Left cardiac atrium (tissue), 4 donors: ENCODE measurements at regions of chr12 and their contacts with region 1.

Region 1: GRCh38 chr12:22083167-22083566 is 37.1 kb downstream of the CMAS start:
- DNase-seq: no peak
- ATAC-seq: peak in 1 of 2 donors; percentile 24

Region 2: DNA sequence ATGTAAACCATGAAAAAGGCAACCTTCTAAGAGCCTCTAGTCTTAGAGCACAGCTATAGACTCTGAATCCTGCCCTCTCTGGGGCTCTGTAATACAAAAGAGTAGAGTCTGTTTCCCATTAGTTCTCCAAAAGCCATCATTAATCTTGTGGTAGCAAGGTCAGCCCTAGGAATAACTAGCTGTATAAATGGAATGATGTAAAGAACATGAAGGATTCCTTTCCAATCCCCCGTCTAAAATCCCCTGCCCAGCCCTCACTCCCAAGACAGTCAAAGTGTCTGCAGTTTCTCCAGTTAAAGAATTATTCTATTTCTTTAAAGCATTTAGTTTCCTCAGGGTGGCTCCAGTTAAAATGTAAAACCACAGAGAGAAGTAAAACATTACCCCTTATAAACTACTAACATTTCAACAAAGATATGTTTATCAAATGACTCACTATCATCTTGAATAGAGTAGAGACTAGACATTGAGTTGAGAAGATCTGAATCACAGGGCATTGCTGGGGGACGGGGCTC is 147.2 kb after region 1 on chr12:
- intact Hi-C with region 1: no loop called
- DNase-seq: no peak
- ATAC-seq: no peak

Region 3: GRCh38 chr12:22334410-22335290 is 251.5 kb after region 1 on chr12 and contains the start of gene ST8SIA1:
- intact Hi-C with region 1: loop called in 1 of 2 experiments (anchors 5 kb)
- DNase-seq: peak; percentile 53
- ATAC-seq: peak; percentile 67 to 73
- total RNA-seq, gene ST8SIA1: 3.0 to 6.9 TPM

Region 4: GRCh38 chr12:22443379-22444316 is 360.5 kb after region 1 on chr12:
- intact Hi-C with region 1: loop called in 1 of 2 experiments (anchors 2 kb)
- DNase-seq: peak; percentile 50
- ATAC-seq: peak; percentile 96 to 98

Region 5: GRCh38 chr12:22459838-22460490 is 376.8 kb after region 1 on chr12:
- intact Hi-C with region 1: loop called (anchors 5 kb)
- DNase-seq: no peak
- ATAC-seq: peak; percentile 53 to 54

Region 6: GRCh38 chr12:22812531-22812930 is 729.4 kb after region 1 on chr12:
- intact Hi-C with region 1: no loop called
- DNase-seq: no peak
- ATAC-seq: no peak